ENCODE measurements at regions of chr15 and their contacts with region 1.

Region 1: DNA sequence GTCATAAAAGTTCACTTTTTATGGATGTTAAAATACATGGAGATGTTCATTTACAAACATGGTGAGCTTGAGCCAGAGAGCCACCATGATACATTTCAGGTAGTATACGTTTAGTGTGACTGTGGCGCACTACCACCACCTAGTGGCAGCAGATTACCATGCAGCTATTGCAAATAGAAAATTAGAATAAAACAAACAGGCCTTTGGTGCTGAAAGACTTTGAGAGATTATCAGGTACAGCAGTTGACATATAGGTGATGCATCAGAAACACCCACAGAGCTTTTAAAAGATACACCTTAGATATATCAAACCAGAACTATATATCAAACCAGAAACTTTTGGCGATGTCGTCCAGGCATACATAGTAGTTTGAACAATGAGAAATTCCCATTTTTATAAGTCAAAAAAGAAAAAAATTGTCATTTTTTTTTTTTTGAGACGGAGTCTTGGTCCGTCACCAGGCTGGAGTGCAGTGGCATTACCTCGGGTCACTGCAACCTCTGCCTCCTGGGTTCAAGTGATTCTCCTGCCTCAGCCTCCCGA is 42.0 kb upstream of the ICE2 start:
- DNase-seq: peak; percentile 68 to 84
- ATAC-seq: peak; percentile 91 to 93
- H3K4me3 ChIP-seq: no peak overlapping the region
- H3K27ac ChIP-seq: no peak overlapping the region
- H3K4me1 ChIP-seq: peaks cover 13% of the 10 kb centered on the region
- CTCF ChIP-seq: peak; percentile 98
- EP300 ChIP-seq: no peak
- POLR2A ChIP-seq: no peak
- RAD21 ChIP-seq: peak; percentile 94 to 98

Region 2: GRCh38 chr15:60315878-60316277 is 205.0 kb before region 1 on chr15:
- CTCF ChIA-PET with region 1: interaction called, 12 read pairs
- POLR2A ChIA-PET with region 1: no interaction called
- DNase-seq: no peak
- ATAC-seq: no peak
- H3K4me3 ChIP-seq: no peak overlapping the region
- H3K27ac ChIP-seq: no peak overlapping the region
- H3K4me1 ChIP-seq: no peaks in the 10 kb centered on the region
- CTCF ChIP-seq: no peak
- EP300 ChIP-seq: no peak
- POLR2A ChIP-seq: no peak
- RAD21 ChIP-seq: no peak

Region 3: GRCh38 chr15:60340207-60340921 is 180.5 kb before region 1 on chr15:
- CTCF ChIA-PET with region 1: interaction called, 27 read pairs
- POLR2A ChIA-PET with region 1: no interaction called
- DNase-seq: no peak
- ATAC-seq: peak; percentile 17 to 30; a peak in 5 of 6 replicates
- H3K4me3 ChIP-seq: no peak overlapping the region
- H3K27ac ChIP-seq: peak overlapping the region; percentile 10 to 56; a peak in 4 of 6 replicates
- H3K4me1 ChIP-seq: peaks cover 47% of the 10 kb centered on the region
- CTCF ChIP-seq: peak; percentile 23; the same call in 1 of the 3 replicates
- EP300 ChIP-seq: no peak
- POLR2A ChIP-seq: no peak
- RAD21 ChIP-seq: peak in 1 of 2 experiments; percentile 38; a peak in 2 of 5 replicates

Region 4: GRCh38 chr15:60351066-60351465 is 169.8 kb before region 1 on chr15:
- CTCF ChIA-PET with region 1: interaction called, 19 read pairs
- POLR2A ChIA-PET with region 1: no interaction called
- DNase-seq: peak in 1 of 2 experiments; percentile 28
- ATAC-seq: peak; percentile 40 to 46
- H3K4me3 ChIP-seq: no peak overlapping the region
- H3K27ac ChIP-seq: peak overlapping the region in 1 of 2 experiments; percentile 58; a peak in 2 of 6 replicates
- H3K4me1 ChIP-seq: peaks cover 99% of the 10 kb centered on the region
- CTCF ChIP-seq: no peak
- EP300 ChIP-seq: no peak
- POLR2A ChIP-seq: no peak
- RAD21 ChIP-seq: no peak

Region 5: GRCh38 chr15:60507596-60508424 is 13.1 kb before region 1 on chr15:
- CTCF ChIA-PET with region 1: interaction called, 277 read pairs
- POLR2A ChIA-PET with region 1: interaction called, 3 read pairs
- DNase-seq: peak; percentile 75
- ATAC-seq: peak; percentile 72 to 91; a peak in 5 of 6 replicates
- H3K4me3 ChIP-seq: no peak overlapping the region
- H3K27ac ChIP-seq: no peak overlapping the region
- H3K4me1 ChIP-seq: 0 out of 3 replicates have a peak, but pooled peaks cover 3% of the 10 kb centered on the region
- CTCF ChIP-seq: peak; percentile 97
- EP300 ChIP-seq: no peak
- POLR2A ChIP-seq: no peak
- RAD21 ChIP-seq: peak; percentile 71 to 82